Calu3 (cell line): ENCODE measurements at regions of chr15 and their contacts with region 1.

Region 1: DNA sequence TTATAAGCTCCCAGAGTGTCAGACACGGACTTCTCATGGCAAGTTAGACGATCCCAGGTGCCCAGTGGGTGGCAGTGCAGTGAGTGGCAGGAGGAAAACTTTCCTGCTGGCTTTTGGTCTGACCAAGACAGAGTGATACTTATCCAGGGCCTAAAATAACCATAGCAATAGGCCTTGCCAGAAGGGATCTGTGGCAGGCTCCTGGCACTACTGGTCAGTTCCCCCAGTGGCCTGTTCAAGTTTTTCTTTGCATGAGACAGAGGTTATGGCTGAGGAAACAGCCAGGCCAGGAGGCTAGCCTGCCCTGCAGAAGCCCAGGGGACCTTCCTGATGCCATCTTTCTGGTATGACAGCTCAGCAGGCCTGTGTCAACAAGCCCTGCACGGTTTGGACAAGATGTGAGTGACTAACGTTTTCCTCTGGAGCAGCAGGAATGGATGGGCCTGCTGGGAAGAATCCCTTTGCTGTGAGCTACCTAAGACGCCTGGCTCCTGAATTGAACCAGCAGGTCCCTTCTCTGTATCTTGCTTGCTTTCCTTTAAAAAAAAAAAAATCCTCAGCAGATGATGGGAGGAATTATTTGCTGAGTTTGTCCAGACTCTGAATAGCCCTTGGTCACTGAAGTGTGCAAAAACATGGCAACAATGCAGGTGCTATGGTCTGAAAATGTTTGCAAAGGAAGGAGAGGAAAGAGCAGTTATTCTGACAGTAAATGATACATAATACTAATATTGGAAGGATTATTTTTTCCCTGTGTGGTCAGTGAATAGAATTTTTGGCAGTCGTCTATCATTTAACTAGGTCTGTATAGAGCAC is 18.0 kb downstream of the SCG5 start:
- DNase-seq: no peak
- H3K4me3 Mint-ChIP-seq: no peak overlapping the region
- H3K27ac Mint-ChIP-seq: no peak overlapping the region
- H3K4me1 Mint-ChIP-seq: no peaks in the 10 kb centered on the region
- H3K27me3 Mint-ChIP-seq: no peaks in the 10 kb centered on the region
- CTCF ChIP-seq: no peak

Region 2: DNA sequence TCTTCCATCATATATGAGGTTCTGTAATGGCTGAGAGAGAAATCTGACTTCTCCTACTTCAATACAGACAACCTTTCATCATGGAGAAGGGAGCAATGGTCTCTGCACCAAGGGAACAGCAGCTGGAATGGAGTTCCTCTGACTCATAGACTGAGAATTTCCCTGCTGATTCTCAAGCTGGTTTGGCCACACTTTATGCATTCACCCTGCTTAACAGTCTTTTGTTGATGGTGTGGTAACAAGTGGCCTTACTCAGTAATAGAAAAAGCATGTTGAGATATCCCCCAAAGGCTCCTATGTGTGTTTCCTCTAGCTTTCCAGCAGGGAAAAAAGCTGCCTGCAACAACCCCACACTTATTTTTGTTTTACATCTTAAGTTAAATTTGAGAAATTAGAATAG is 196.4 kb after region 1 on chr15:
- CTCF ChIA-PET with region 1: no interaction called
- intact Hi-C with region 1: loop called (anchors 10 kb)
- DNase-seq: peak; percentile 24
- H3K4me3 Mint-ChIP-seq: no peak overlapping the region
- H3K27ac Mint-ChIP-seq: no peak overlapping the region
- H3K4me1 Mint-ChIP-seq: no peaks in the 10 kb centered on the region
- H3K27me3 Mint-ChIP-seq: no peaks in the 10 kb centered on the region
- CTCF ChIP-seq: no peak

Region 3: GRCh38 chr15:32994810-32995424 is 335.4 kb after region 1 on chr15:
- CTCF ChIA-PET with region 1: no interaction called
- intact Hi-C with region 1: loop called (anchors 2 kb)
- DNase-seq: no peak
- H3K4me3 Mint-ChIP-seq: no peak overlapping the region
- H3K27ac Mint-ChIP-seq: no peak overlapping the region
- H3K4me1 Mint-ChIP-seq: no peaks in the 10 kb centered on the region
- H3K27me3 Mint-ChIP-seq: no peaks in the 10 kb centered on the region
- CTCF ChIP-seq: no peak